Activated CD8-positive, alpha-beta T cell treated with anti-CD3 and anti-CD28 coated beads for 36 hours (primary cell): ENCODE measurements at regions of chr14 and their contacts with region 1.

Region 1: DNA sequence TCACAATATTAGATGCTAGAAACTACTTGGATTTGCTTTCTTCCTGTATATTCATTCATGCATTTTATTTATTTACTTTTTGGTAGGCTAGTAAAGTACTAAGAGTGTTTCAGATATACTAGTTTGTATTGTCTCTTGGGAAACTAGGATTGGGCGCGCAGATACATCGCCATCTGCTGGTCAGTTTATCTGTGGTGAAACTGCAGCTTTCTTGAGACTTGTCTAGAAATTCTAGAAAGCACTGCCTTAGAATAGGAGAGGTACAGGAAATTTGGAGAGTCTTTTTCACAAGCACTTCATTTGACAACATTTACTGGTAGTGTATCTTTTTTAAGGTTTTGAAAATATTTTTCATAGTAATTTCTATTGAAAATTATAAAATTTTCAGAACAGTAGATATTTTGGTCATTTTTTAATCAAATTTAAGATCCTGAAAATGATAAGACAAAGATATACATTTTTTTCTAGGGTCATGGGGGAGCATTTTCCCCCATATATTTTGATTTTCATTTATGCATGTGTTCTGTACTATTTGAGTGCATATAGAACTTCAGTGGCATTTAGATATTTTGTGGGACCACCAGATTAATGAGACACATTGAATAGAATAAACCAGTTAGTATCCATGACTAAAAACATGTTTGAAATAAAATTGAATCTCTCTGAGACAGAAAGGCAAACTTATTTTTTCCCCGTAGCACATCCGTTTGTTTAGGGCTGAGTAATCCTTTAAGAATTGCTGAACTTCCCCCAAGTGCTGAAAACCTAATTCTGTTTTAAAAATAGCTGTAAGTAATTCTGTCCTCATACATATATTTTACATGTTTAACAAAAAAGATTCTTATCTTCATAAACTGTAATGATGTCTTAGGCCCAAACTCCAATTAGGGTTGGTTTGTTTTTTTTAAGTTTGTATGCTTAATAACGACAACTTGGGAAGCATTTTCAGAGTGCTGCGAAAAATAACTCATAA is 44.5 kb downstream of the SLC38A6 start:
- DNase-seq: peak; percentile 73
- ATAC-seq: peak; percentile 61
- H3K4me3 Mint-ChIP-seq: no peak overlapping the region
- H3K27ac Mint-ChIP-seq: no peak overlapping the region
- H3K4me1 Mint-ChIP-seq: no peaks in the 10 kb centered on the region
- H3K27me3 Mint-ChIP-seq: no peaks in the 10 kb centered on the region
- CTCF ChIP-seq: peak; percentile 94

Region 2: GRCh38 chr14:60656686-60657455 is 368.7 kb before region 1 on chr14:
- CTCF ChIA-PET with region 1: no interaction called
- POLR2A ChIA-PET with region 1: no interaction called
- intact Hi-C with region 1: loop called (anchors 10 kb)
- DNase-seq: no peak
- ATAC-seq: peak; percentile 73
- H3K4me3 Mint-ChIP-seq: peak overlapping the region; percentile 74
- H3K27ac Mint-ChIP-seq: no peak overlapping the region
- H3K4me1 Mint-ChIP-seq: peaks cover 48% of the 10 kb centered on the region
- H3K27me3 Mint-ChIP-seq: peaks cover 81% of the 10 kb centered on the region
- CTCF ChIP-seq: no peak

Region 3: DNA sequence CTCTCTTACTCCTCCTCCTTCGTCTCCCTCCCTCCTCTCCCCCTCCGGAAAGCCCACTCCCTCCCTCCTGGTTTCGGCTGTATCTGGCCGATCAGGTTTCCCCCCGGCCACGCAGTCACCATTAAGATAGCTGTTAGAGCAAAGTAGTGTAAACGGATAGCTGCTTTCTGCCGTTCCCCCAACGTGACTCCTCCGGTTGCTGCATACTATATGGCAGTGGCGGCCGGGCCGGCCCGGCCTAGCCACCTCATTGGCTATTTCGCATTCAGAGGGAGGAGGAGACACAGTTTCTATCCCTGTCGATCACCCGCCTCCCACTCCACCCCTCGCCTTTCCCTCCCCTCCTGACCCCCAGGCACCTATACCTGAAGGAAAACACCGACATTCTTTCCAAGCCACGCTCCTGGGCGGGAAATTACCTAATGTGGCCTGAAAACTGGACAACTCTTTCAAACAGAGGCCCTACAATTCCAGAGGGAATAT is 301.4 kb before region 1 on chr14 and contains the start of gene SIX4:
- CTCF ChIA-PET with region 1: interaction called, 3 read pairs
- POLR2A ChIA-PET with region 1: no interaction called
- intact Hi-C with region 1: loop called (anchors 10 kb)
- DNase-seq: peak; percentile 51
- ATAC-seq: peak; percentile 25
- H3K4me3 Mint-ChIP-seq: peak within 1 kb of the TSS; percentile 80
- H3K27ac Mint-ChIP-seq: no peak within 1 kb of the TSS
- H3K4me1 Mint-ChIP-seq: peaks cover 16% of the 10 kb centered on the region
- H3K27me3 Mint-ChIP-seq: peaks cover 65% of the 10 kb centered on the region
- CTCF ChIP-seq: no peak
- total RNA-seq, gene SIX4: not detected

Region 4: DNA sequence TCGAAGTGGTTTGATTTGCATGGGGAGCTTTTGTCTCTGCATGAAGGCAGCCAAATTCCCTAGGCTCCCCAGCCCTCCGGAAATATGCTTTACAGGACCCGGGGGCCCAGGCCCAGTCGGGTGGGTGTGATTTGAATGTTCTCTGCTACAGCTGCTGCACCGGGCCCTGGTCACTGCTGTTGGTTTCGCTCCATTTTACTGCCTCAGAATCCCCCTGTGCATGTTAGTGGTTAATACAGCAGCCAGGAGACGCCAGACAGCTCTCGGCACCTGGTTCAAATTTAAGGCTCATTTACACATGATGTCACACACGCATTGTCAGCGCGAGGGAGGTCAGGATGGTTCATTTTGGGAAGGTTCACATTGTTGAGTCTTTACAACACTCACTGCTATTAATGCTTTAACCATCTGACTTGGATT is 55.1 kb after region 1 on chr14:
- CTCF ChIA-PET with region 1: no interaction called
- POLR2A ChIA-PET with region 1: no interaction called
- intact Hi-C with region 1: no loop called
- DNase-seq: no peak
- ATAC-seq: no peak
- H3K4me3 Mint-ChIP-seq: no peak overlapping the region
- H3K27ac Mint-ChIP-seq: no peak overlapping the region
- H3K4me1 Mint-ChIP-seq: no peaks in the 10 kb centered on the region
- H3K27me3 Mint-ChIP-seq: no peaks in the 10 kb centered on the region
- CTCF ChIP-seq: no peak

Region 5: DNA sequence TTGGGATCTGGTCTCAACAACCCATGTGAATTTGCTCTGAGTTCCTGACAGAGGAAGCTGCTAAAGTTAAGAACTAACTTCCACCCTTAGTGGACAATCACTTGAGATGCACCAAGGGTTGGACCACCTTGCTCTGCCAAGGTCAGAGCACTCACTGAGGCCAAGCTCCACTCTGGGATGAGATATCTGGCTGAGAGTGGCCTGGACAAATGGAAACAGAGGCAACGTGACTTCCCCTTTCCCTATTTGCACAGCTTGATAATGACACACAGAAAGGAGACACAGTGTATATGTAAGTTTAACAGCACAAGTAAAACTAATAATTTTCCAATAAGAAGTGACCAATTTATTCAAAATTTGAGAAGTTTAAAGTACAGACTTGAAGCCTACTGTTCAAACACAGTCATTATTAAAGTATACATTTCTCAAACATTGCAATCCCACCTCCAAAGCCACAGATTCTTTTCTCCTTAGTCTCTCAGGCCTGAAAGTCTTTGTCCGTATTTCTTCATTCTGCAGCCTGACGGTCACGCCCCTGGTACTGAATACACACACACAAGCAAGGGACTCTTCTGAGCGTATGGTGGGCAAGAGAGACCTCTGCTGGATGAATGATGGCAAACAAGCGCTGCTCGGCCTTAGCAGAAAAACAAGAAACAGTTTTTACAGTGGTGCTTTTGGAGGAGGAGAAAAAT is 227.0 kb after region 1 on chr14:
- CTCF ChIA-PET with region 1: interaction called, 8 read pairs
- POLR2A ChIA-PET with region 1: no interaction called
- intact Hi-C with region 1: loop called (anchors 10 kb)
- DNase-seq: peak; percentile 80
- ATAC-seq: peak; percentile 94
- H3K4me3 Mint-ChIP-seq: no peak overlapping the region
- H3K27ac Mint-ChIP-seq: no peak overlapping the region
- H3K4me1 Mint-ChIP-seq: peaks cover 7% of the 10 kb centered on the region
- H3K27me3 Mint-ChIP-seq: peaks cover 10% of the 10 kb centered on the region
- CTCF ChIP-seq: peak; percentile 91